ENCODE measurements at regions of chr15 and their contacts with region 1.

Region 1: GRCh38 chr15:41621200-41622193 is 38.7 kb upstream of the MGA start:
- DNase-seq: peak; percentile 13
- H3K4me3 ChIP-seq: peak overlapping the region; percentile 46
- H3K27me3 ChIP-seq: no peaks in the 10 kb centered on the region
- CTCF ChIP-seq: no peak

Region 2: GRCh38 chr15:41594801-41595746 is 26.4 kb before region 1 on chr15:
- CTCF ChIA-PET with region 1: no interaction called
- POLR2A ChIA-PET with region 1: interaction called, 15 read pairs
- DNase-seq: no peak
- H3K4me3 ChIP-seq: no peak overlapping the region
- H3K27me3 ChIP-seq: peaks cover 3% of the 10 kb centered on the region
- CTCF ChIP-seq: no peak

Region 3: GRCh38 chr15:41727143-41727542 is 105.6 kb after region 1 on chr15:
- CTCF ChIA-PET with region 1: no interaction called
- POLR2A ChIA-PET with region 1: no interaction called
- DNase-seq: peak; percentile 14
- H3K4me3 ChIP-seq: no peak overlapping the region
- H3K27me3 ChIP-seq: no peaks in the 10 kb centered on the region
- CTCF ChIP-seq: no peak

Measured in BJ (cell line).